Activated naive CD4-positive, alpha-beta T cell treated with anti-CD3 and anti-CD28 coated beads for 36 hours (primary cell): ENCODE measurements at regions of chr6 and their contacts with region 1.

Region 1: DNA sequence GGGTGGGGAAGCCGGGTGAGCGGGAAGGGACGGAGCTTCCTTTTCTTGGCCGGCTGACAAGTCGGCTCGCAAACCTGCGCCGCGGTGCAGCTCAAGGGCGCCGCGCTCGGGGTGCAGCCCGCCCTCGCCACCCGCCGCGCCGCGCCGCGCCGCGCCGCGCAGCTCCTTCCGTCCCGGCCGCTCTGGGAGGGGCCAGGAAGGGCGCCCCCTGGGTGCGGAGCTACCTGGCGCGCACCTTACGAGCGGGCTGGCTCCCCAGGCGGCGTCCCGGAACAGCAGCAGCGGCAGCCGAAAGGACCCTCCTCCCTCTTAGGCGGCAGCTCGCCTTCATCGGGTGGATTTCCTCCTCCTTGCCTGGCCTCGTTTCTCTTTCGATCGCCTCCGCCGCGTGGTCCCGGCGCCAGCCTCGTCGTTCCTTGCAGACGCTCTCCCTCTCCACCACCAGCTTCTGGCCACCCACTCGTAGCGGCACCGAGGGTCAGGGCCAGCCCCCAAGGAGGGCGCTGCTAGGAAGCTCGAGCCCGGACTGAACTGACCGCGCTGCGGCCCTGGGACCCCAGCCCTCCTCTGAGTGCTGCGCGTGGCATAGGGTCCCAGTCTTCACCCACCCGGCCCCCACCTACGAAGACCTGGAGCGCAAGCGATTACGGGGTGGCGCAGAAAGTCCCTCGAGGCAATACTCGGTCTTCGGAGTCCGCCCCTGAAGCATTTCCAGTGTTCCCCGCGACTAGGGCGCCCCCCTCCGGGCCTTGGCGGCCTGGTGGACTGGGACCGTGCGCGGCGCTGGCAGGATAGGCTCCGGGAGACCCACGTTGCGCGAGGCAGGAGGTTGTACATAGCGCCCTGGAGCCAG is at the start of gene MAP3K5:
- DNase-seq: peak; percentile 96
- H3K4me3 Mint-ChIP-seq: peak within 1 kb of the TSS; percentile 89
- H3K27ac Mint-ChIP-seq: peak within 1 kb of the TSS; percentile 86
- H3K4me1 Mint-ChIP-seq: peaks cover 33% of the 10 kb centered on the region
- H3K27me3 Mint-ChIP-seq: no peaks in the 10 kb centered on the region
- total RNA-seq, gene MAP3K5: 9.4 to 9.7 TPM

Region 2: GRCh38 chr6:136503303-136504029 is 289.2 kb before region 1 on chr6:
- CTCF ChIA-PET with region 1: no interaction called
- intact Hi-C with region 1: no loop called
- DNase-seq: no peak
- H3K4me3 Mint-ChIP-seq: no peak overlapping the region
- H3K27ac Mint-ChIP-seq: no peak overlapping the region
- H3K4me1 Mint-ChIP-seq: no peaks in the 10 kb centered on the region
- H3K27me3 Mint-ChIP-seq: no peaks in the 10 kb centered on the region

Region 3: DNA sequence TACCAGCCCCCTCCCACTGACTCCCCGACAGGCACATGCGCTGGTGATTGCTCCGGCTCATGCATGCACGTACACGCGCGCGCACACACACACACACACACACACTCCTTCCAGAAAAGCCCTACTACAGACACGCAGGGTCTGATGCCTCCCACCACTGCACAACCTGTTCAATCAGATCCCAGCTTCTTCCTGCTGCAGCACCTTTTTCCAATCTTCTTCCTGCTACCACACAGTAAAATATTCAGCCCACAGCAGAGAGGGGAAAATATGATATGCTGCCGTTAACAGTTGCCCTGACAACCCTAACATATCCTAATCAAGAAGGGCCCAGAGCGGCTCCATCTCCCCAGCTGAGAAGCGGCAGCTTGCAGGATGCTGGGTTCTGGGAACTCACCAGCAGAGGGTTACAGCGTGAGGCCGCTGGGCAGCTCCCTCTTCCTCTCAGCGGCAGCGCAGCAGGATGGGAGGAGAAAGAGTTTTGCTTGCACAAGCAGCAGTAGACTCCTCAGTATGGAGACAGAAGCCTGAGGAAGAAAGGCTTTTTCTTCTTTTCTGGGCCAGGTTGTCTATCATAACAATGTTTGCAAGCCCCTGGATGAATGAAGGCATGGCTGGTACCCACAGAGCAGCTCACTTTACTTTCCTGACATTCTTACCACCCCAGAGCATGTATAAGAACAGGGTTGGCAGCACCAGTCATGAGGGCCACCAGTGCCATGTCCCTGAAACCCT is 266.3 kb before region 1 on chr6:
- CTCF ChIA-PET with region 1: no interaction called
- intact Hi-C with region 1: loop called (anchors 1 kb)
- DNase-seq: peak; percentile 73
- H3K4me3 Mint-ChIP-seq: peak overlapping the region; percentile 61
- H3K27ac Mint-ChIP-seq: peak overlapping the region; percentile 44
- H3K4me1 Mint-ChIP-seq: peaks cover 23% of the 10 kb centered on the region
- H3K27me3 Mint-ChIP-seq: peaks cover 10% of the 10 kb centered on the region

Region 4: GRCh38 chr6:136593748-136594490 is 198.7 kb before region 1 on chr6:
- CTCF ChIA-PET with region 1: interaction called, 5 read pairs
- intact Hi-C with region 1: loop called (anchors 1 kb)
- DNase-seq: peak; percentile 79
- H3K4me3 Mint-ChIP-seq: peak overlapping the region; percentile 27
- H3K27ac Mint-ChIP-seq: peak overlapping the region; percentile 83
- H3K4me1 Mint-ChIP-seq: peaks cover 19% of the 10 kb centered on the region
- H3K27me3 Mint-ChIP-seq: no peaks in the 10 kb centered on the region

Region 5: DNA sequence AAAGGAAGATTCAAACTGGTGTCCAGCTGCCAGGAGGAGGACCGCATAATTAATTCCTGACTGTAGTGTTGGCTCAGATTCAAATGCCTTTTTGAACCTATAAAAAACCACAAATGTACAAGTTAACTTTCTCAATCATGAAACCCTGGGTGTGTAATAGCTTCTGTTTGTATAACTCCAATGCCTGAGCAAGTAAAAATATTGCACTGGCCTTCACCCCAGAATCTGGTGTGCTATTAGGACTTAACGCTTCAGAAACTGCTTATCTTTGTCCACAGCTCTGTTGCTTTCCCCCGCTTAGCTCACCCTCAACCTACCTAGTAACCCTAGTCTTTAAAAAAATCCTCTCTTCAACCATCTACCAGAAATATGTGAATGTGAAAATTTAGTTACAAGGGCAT is 123.3 kb before region 1 on chr6:
- CTCF ChIA-PET with region 1: interaction called, 11 read pairs
- intact Hi-C with region 1: no loop called
- DNase-seq: no peak
- H3K4me3 Mint-ChIP-seq: no peak overlapping the region
- H3K27ac Mint-ChIP-seq: no peak overlapping the region
- H3K4me1 Mint-ChIP-seq: no peaks in the 10 kb centered on the region
- H3K27me3 Mint-ChIP-seq: no peaks in the 10 kb centered on the region

Region 6: DNA sequence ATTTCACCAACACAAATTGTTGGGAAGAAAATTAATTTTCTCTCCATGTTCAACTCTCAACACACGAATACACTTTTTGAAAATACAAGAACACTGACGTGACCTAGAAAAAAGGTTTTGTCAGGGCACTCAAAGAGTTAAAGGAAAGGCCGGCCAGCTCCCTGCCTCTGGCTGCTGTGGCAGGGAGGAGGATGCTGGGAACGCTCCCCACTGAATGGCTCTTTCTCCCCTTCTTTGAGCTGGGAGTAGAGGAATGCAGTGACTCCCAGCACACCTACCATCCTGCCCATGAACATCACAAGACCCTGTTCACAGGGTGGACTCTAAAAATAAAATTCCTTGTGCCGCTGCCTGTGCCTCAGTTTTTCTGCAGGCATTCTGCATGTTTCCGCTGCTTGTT is 47.3 kb before region 1 on chr6:
- CTCF ChIA-PET with region 1: interaction called, 31 read pairs
- intact Hi-C with region 1: no loop called
- DNase-seq: no peak
- H3K4me3 Mint-ChIP-seq: no peak overlapping the region
- H3K27ac Mint-ChIP-seq: no peak overlapping the region
- H3K4me1 Mint-ChIP-seq: peaks cover 21% of the 10 kb centered on the region
- H3K27me3 Mint-ChIP-seq: no peaks in the 10 kb centered on the region

Region 7: DNA sequence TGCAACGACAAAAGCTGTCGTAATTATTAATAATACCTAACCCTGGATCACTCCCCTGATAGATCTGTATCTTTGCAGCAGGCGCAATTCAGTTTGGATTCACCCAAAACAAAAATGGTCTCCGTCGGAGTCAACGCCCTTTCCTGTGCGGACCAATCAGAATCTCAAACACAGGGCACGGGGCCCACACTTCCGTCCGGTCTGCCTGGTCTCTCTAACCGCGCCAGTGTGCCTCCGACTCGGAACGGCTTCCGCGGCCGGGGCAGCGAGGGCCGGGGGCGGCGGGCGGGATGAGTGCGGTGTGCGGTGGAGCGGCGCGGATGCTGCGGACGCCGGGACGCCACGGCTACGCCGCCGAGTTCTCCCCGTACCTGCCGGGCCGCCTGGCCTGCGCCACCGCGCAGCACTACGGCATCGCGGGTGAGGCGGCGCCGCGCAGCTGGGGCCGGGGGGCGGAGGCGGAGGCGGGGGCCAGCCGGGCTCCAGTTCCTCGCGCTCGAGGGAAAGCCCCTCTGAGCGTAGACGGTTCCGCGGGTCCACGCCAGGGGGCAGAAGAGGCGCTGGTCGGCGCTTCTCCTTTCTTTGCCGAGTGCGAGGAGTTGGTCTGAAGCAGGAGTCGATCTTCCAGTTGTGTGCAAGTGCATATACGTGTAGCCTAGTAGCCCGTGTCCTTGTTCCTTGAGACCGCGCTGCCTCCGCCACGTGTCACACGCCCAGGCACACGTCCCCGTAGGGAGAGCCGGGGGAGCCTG is 29.9 kb after region 1 on chr6 and contains the start of gene PEX7:
- CTCF ChIA-PET with region 1: interaction called, 6 read pairs
- intact Hi-C with region 1: loop called (anchors 1 kb)
- DNase-seq: peak; percentile 92
- H3K4me3 Mint-ChIP-seq: peak within 1 kb of the TSS; percentile 90
- H3K27ac Mint-ChIP-seq: peak within 1 kb of the TSS; percentile 92
- H3K4me1 Mint-ChIP-seq: peaks cover 19% of the 10 kb centered on the region
- H3K27me3 Mint-ChIP-seq: no peaks in the 10 kb centered on the region
- total RNA-seq, gene PEX7: 6.0 to 6.4 TPM

Region 8: DNA sequence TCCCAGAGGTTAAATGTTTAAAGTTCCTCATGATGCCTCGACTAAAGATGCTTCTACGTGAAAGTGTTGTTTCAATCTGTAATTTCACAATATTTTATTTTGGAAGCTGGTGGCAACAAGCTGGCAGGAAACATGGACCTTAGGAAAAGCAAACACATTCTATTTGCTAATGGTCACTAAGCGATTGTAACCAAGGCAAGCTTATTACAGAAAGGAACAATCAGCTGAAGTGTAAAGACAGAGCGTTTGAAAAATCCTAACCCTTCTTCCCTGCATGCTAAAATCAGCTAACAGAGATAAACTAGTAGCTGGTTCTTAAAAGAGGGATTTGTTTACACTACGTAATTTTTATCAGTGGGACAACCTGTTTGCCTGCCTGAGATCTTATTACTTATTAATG is 202.1 kb after region 1 on chr6:
- CTCF ChIA-PET with region 1: no interaction called
- intact Hi-C with region 1: no loop called
- DNase-seq: no peak
- H3K4me3 Mint-ChIP-seq: no peak overlapping the region
- H3K27ac Mint-ChIP-seq: no peak overlapping the region
- H3K4me1 Mint-ChIP-seq: no peaks in the 10 kb centered on the region
- H3K27me3 Mint-ChIP-seq: peaks cover 44% of the 10 kb centered on the region